ENCODE measurements at regions of chr22 and their contacts with region 1.

Region 1: DNA sequence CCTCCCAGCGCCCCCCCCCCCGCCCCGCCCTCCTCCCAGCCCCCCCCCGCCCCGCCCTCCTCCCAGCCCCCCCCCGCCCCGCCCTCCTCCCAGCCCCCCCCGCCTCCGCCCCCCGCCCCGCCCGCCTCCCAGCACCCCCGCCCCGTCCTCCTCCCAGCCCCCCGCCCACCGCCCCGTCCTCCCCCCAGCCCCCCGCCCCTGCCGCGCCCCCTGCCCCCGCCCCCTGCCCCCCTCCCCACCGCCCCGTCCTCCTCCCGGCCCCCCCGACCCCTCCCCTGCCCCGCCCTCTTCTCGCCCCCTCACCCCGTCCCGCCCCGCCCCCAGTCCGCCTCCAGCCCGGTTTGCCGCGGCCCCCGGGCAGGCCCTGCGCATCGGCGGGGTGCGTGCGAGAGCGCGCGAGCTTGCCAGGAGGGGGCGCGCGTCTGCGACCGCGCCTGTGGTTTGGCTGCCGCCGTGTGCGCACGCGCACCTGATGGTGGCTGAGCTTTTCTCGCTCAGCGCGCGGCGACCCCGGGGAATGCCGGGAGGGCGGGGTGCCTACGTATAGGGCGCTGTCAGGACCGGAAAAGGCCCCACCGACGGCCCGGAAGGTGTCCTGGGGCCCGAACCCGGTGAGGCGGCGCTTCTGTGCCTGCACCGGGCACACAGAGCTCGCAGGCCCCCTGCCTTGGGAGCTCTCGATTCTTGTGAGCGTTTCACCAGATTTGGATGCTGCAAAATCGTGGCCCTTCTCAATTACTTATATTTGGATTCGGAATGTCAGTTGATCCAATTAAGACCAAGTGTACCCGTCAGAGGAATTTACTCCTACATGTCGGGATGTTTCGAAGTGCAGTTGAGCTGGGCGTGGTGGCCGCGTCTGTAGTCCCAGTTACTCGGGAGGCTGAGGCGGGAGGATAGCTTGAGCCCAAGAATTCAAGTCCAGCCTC is 501 bp upstream of the TTLL12 start:
- DNase-seq: peak; percentile 93 to 98 (median 97)
- ATAC-seq: peak; percentile 94
- H3K4me3 ChIP-seq: peak overlapping the region; percentile 65
- H3K4me3 Mint-ChIP-seq: peak overlapping the region; percentile 75 to 89 (median 86)
- H3K27ac ChIP-seq: peak overlapping the region; percentile 91
- H3K27ac Mint-ChIP-seq: peak overlapping the region; percentile 94 to 99 (median 98)
- H3K4me1 ChIP-seq: peaks cover 18% of the 10 kb centered on the region in 2 donors
- H3K4me1 Mint-ChIP-seq: peaks cover 5 to 36% (median 24%) of the 10 kb centered on the region in 7 donors
- H3K27me3 ChIP-seq: no peaks in the 10 kb centered on the region
- H3K27me3 Mint-ChIP-seq: peaks cover 0 to 15% (median 0%) of the 10 kb centered on the region in 5 donors

Region 2: DNA sequence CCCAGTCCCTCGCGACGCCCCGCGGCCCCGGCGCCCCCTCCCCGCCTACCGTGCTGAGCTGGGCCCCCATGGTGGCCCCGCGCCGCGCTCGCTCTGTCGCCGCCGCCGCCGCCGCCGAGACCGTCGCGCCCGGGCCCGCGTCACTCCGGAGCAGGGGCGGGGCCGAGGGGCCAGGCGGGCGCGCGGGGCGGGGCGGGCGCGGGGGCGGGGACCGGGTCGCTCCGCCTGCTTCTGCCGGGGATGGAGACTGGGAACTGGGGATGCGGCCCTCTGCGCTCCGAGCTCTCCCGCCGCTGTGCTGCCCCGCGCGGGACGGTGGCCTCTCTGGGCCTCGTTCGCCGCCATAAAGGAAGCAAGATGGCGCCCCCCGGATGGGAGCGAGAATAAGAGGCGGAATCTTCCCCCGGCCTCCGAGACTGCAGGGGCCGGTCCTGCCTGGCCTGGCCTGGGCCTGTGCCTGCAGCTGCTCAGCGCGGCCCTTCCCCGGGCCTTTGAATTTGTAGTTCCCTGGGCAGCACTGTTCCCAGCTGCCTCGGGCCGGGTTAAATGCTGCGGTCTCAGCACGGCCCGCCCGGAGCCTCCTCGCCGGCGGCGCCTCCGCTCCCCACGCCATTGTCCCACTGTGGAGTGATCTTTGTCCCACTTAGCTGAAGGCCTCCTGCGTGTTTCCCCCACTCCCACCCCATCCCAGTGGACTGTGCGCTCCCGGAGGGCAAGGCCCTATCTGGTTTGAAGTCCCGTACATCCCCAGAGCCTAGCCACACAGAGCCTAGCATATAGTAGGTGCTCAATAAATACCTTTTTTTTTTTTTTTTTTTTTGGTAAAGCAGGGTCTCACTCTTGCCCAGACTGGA is 538.0 kb before region 1 on chr22 and contains the start of gene CYB5R3:
- CTCF ChIA-PET with region 1: no interaction called
- POLR2A ChIA-PET with region 1: no interaction called
- intact Hi-C with region 1: loop called in 1 of 2 experiments (anchors 5 kb)
- DNase-seq: peak; percentile 59 to 84 (median 76)
- ATAC-seq: peak; percentile 89
- H3K4me3 ChIP-seq: peak within 1 kb of the TSS; percentile 77
- H3K4me3 Mint-ChIP-seq: peak within 1 kb of the TSS; percentile 91 to 100 (median 98)
- H3K27ac ChIP-seq: peak within 1 kb of the TSS; percentile 84
- H3K27ac Mint-ChIP-seq: peak within 1 kb of the TSS; percentile 91 to 100 (median 98)
- H3K4me1 ChIP-seq: peaks cover 11 to 16% of the 10 kb centered on the region in 2 donors
- H3K4me1 Mint-ChIP-seq: peaks cover 7 to 38% (median 28%) of the 10 kb centered on the region in 7 donors
- H3K27me3 ChIP-seq: no peaks in the 10 kb centered on the region
- H3K27me3 Mint-ChIP-seq: peaks cover 0 to 2% (median 0%) of the 10 kb centered on the region in 5 donors
- total RNA-seq, gene CYB5R3: 34.3 to 70.6 (median 42.3) TPM

Region 3: GRCh38 chr22:43014869-43015676 is 172.4 kb before region 1 on chr22 and contains the start of gene PACSIN2:
- CTCF ChIA-PET with region 1: no interaction called
- POLR2A ChIA-PET with region 1: interaction called, 4 read pairs
- intact Hi-C with region 1: loop called in 1 of 2 experiments (anchors 1 kb)
- DNase-seq: peak; percentile 95 to 99 (median 97)
- ATAC-seq: peak; percentile 99
- H3K4me3 ChIP-seq: peak within 1 kb of the TSS; percentile 91
- H3K4me3 Mint-ChIP-seq: peak within 1 kb of the TSS; percentile 93 to 99 (median 98)
- H3K27ac ChIP-seq: peak within 1 kb of the TSS; percentile 83
- H3K27ac Mint-ChIP-seq: peak within 1 kb of the TSS; percentile 87 to 98 (median 95)
- H3K4me1 ChIP-seq: peaks cover 9 to 17% of the 10 kb centered on the region in 2 donors
- H3K4me1 Mint-ChIP-seq: peaks cover 18 to 56% (median 42%) of the 10 kb centered on the region in 7 donors
- H3K27me3 ChIP-seq: no peaks in the 10 kb centered on the region
- H3K27me3 Mint-ChIP-seq: peaks cover 0 to 5% (median 0%) of the 10 kb centered on the region in 5 donors
- total RNA-seq, gene PACSIN2: 27.6 to 62.5 (median 38.1) TPM

Region 4: DNA sequence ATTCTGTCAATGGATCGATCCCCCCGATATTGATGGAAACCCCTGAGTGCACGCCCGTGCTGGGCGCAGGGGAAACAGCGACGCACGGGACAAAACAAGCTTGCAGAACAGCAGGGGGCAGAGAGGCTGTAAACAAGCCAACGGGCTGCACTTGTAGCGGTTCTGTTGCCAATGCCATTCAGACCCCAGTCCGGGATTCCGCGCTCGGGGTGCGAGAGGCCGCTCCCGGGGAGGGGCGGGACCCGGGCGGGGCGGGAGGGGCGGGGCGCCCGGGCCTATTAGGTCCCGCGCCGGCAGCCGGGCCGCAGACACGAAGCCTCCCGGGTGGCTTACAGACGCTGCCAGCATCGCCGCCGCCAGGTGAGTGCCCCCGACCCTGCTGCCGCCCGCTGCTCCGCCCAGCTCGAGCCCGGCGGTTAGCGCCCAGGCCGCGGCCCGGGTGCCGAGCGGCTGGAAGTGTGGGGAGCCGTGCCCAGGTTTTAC is 77.0 kb before region 1 on chr22 and contains the start of gene BIK:
- CTCF ChIA-PET with region 1: no interaction called
- POLR2A ChIA-PET with region 1: no interaction called
- intact Hi-C with region 1: loop called in 1 of 2 experiments (anchors 1 kb)
- DNase-seq: peak; percentile 10 to 41 (median 29)
- ATAC-seq: peak; percentile 69
- H3K4me3 ChIP-seq: peak within 1 kb of the TSS; percentile 74
- H3K4me3 Mint-ChIP-seq: peak within 1 kb of the TSS; percentile 81 to 90 (median 84)
- H3K27ac ChIP-seq: peak within 1 kb of the TSS; percentile 53
- H3K27ac Mint-ChIP-seq: peak within 1 kb of the TSS in 5 of 9 donors; percentile 22 to 87 (median 72)
- H3K4me1 ChIP-seq: peaks cover 0 to 6% of the 10 kb centered on the region in 2 donors
- H3K4me1 Mint-ChIP-seq: peaks cover 0 to 9% (median 7%) of the 10 kb centered on the region in 7 donors
- H3K27me3 ChIP-seq: no peaks in the 10 kb centered on the region
- H3K27me3 Mint-ChIP-seq: peaks cover 0 to 45% (median 0%) of the 10 kb centered on the region in 5 donors
- total RNA-seq, gene BIK: 1.1 to 2.6 (median 1.4) TPM

Region 5: DNA sequence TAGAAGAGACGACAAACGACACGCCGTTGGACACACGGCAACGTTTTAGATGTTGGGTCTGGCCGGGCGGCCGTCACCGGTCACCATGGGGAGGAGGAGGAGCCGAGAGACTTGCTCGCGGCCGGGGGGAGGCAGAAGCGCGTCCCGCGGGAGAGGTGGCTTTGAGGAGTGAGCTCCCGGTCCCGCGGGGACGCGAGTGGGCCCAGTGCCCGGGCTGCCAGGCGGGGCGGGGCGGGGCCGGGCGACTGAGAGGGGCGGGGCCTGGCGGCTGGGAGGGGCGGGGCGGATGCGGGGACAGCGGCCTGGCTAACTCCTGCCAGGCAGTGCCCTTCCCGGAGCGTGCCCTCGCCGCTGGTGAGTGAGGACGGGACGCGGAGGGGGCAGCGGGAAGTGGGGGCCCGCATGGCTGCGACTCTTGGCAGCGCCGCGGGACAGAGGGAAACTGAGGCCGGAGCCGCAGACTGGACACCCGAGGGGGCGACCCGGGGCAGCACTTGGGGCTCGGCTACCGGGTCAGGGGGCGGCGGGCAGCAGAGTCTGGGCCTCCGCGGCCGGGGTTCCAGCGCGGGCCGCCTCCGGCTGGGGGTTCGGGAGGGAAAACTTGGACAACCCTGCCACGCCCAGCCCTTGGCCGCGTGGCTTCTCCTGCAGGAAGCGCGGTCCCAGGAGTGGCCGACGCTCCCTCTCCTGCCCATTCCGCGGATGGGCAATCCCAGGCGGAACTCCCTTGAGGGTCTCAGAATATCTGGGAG is 36.0 kb before region 1 on chr22 and contains the start of gene TSPO:
- CTCF ChIA-PET with region 1: no interaction called
- POLR2A ChIA-PET with region 1: interaction called, 17 read pairs
- intact Hi-C with region 1: loop called (anchors 1 to 2 kb)
- DNase-seq: peak; percentile 17 to 76 (median 39)
- ATAC-seq: peak; percentile 70
- H3K4me3 ChIP-seq: peak within 1 kb of the TSS; percentile 90
- H3K4me3 Mint-ChIP-seq: peak within 1 kb of the TSS; percentile 83 to 95 (median 92)
- H3K27ac ChIP-seq: peak within 1 kb of the TSS; percentile 78
- H3K27ac Mint-ChIP-seq: peak within 1 kb of the TSS; percentile 83 to 96 (median 93)
- H3K4me1 ChIP-seq: peaks cover 5 to 13% of the 10 kb centered on the region in 2 donors
- H3K4me1 Mint-ChIP-seq: peaks cover 16 to 47% (median 29%) of the 10 kb centered on the region in 7 donors
- H3K27me3 ChIP-seq: no peaks in the 10 kb centered on the region
- H3K27me3 Mint-ChIP-seq: no peaks in the 10 kb centered on the region
- total RNA-seq, gene TSPO: 56.1 to 190 (median 61.5) TPM

Region 6: DNA sequence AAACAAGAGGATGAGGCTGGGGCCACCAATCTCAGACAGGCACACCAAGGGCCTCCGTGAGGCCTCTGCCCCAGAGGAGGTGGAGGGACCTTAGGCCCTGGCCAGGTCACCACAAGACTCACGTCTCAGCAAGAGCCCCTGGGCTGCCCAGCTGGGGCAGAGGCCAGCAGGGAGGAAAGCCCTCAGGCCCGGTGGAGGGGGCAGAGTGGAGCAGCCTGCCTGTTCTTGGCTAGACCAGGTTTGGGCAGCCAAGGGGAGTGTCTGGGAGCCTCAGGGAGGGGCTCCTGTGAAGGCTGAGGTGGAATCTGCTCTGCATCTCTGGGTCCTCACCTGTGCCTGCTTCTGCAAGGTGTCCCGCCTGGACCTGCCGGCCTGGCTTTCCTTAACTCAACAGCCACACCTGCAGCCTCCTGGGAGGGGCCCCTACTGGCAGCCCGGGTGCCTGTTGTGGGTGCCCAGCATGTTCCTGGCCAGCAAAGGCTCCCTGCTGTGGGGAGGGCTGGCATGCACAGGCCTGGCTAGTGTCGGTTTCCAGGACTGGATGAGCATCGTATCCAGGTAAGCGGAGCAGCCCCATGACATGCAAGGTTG is 12.4 kb before region 1 on chr22:
- CTCF ChIA-PET with region 1: no interaction called
- POLR2A ChIA-PET with region 1: no interaction called
- intact Hi-C with region 1: no loop called
- DNase-seq: no peak
- ATAC-seq: no peak
- H3K4me3 ChIP-seq: no peak overlapping the region
- H3K4me3 Mint-ChIP-seq: no peak overlapping the region
- H3K27ac ChIP-seq: no peak overlapping the region
- H3K27ac Mint-ChIP-seq: no peak overlapping the region
- H3K4me1 ChIP-seq: no peaks in the 10 kb centered on the region
- H3K4me1 Mint-ChIP-seq: peaks cover 0 to 6% (median 0%) of the 10 kb centered on the region in 7 donors
- H3K27me3 ChIP-seq: no peaks in the 10 kb centered on the region
- H3K27me3 Mint-ChIP-seq: no peaks in the 10 kb centered on the region

Region 7: DNA sequence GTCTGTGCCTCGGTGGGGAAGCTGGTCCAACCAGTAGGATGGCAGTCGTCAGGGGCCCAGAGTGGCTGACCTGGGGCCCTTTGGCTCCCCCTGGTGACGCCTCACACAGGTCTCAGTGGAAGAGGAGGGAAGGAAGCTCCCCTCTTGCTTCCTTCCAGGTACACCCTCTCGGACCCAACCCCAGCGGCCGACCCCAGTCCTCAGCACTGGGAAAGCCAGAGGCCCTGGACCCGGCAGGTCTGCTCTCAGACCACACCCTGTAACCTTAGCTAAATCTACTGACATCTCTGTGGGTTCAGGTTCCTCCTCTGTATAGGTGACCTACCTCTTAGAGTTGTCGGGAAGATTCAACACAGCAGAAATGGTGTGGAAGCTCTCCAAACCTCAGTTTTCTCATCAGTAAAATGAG is 159.1 kb after region 1 on chr22:
- CTCF ChIA-PET with region 1: no interaction called
- POLR2A ChIA-PET with region 1: no interaction called
- intact Hi-C with region 1: loop called in 1 of 2 experiments (anchors 1 kb)
- DNase-seq: peak; percentile 27 to 69 (median 45)
- ATAC-seq: peak; percentile 58
- H3K4me3 ChIP-seq: no peak overlapping the region
- H3K4me3 Mint-ChIP-seq: no peak overlapping the region
- H3K27ac ChIP-seq: no peak overlapping the region
- H3K27ac Mint-ChIP-seq: no peak overlapping the region
- H3K4me1 ChIP-seq: no peaks in the 10 kb centered on the region
- H3K4me1 Mint-ChIP-seq: peaks cover 4 to 24% (median 10%) of the 10 kb centered on the region in 7 donors
- H3K27me3 ChIP-seq: peaks cover 0 to 4% of the 10 kb centered on the region in 2 donors
- H3K27me3 Mint-ChIP-seq: peaks cover 33 to 61% (median 55%) of the 10 kb centered on the region in 5 donors

Region 8: DNA sequence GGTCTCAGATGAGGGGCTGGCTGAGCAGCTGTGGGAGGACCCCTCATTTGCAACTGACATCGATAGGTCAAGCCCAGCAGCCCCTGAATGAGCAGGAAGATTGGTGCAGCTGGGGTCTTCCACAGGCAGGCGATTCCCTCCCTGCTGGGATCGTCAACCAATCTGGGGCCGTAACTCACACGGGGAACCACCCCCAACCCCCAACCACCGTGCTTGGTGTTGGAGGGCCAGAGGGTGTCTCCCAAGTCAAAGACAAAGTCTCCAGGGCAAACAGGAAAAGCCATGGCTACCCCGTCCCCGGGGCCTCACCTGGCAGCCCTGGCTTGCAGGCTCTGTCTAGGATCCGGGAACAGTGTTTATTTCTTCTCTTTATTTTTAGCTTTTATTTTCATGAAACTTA is 182.6 kb after region 1 on chr22:
- CTCF ChIA-PET with region 1: no interaction called
- POLR2A ChIA-PET with region 1: no interaction called
- intact Hi-C with region 1: no loop called
- DNase-seq: no peak
- ATAC-seq: no peak
- H3K4me3 ChIP-seq: no peak overlapping the region
- H3K4me3 Mint-ChIP-seq: no peak overlapping the region
- H3K27ac ChIP-seq: no peak overlapping the region
- H3K27ac Mint-ChIP-seq: no peak overlapping the region
- H3K4me1 ChIP-seq: no peaks in the 10 kb centered on the region
- H3K4me1 Mint-ChIP-seq: no peaks in the 10 kb centered on the region
- H3K27me3 ChIP-seq: no peaks in the 10 kb centered on the region
- H3K27me3 Mint-ChIP-seq: peaks cover 48 to 60% (median 54%) of the 10 kb centered on the region in 5 donors